ENCODE measurements at regions of chr13 and their contacts with region 1.

Region 1: DNA sequence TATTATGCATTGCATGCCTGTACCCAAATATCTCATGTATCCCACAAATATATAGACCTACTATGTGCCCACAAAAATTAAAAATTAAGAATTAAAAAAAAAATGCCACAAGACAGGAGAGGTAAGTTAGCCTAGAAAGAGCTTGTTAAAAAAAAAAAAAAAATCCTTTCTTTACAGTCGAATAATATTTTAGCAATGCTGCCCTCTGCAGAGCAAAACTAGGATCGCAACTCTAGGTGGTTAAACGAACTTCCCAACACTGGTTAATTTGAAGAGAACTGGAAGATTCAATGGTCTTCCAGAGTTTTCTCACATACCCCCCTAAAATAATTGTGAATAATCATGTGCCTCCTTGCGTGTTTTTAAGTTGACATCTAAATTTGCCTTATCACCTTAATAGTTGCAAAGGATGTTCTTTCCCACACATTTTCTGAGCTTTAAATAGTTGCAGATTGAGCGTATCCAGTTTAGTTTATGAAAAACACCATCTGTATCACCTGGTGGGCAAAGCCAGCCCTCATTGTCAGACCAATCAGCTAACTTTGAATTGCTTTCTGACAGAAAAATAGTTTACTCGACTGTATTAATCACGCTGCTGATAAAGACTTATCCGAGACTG is 47.4 kb upstream of the RCBTB2 start:
- DNase-seq: no peak
- CTCF ChIP-seq: peak; percentile 61

Region 2: DNA sequence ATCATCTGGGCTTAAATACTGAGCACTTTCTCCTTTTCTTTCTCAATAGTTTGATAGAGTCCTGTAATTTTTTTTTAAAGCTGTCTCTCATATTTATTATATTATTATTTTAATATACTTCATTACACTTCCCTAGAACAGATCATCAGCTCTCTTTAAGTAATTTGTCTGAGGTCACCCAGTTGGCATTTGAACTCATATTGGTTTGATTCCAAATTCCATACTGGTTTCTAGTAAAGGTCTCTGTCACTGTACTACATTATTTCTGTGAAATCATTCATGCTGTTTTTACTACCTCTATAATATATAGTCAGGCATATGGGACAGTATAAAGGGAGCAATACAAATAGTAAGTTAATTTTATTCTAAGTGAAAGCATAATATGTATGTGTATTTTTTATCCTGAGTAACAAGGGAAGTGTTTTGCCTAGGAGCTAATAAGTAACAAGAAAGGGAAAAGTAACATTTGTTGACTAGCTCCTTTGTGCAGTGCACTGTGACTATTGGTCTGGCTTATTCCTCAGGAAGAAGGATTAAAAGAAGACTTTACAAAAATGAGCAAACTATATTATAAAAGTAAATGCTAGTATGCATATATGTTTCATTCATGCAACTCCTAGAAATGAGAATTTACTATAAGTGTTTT is 181.7 kb before region 1 on chr13:
- in situ Hi-C with region 1: loop called (anchors 10 kb)
- DNase-seq: no peak
- CTCF ChIP-seq: no peak

Region 3: GRCh38 chr13:48492470-48493065 is 87.7 kb before region 1 on chr13:
- in situ Hi-C with region 1: loop called (anchors 10 kb)
- DNase-seq: peak; percentile 49
- CTCF ChIP-seq: no peak